HepG2 (cell line): ENCODE measurements at regions of chr4 and their contacts with region 1.

Region 1: GRCh38 chr4:38078590-38079421 is 118.6 kb downstream of the PTTG2 start:
- DNase-seq: peak; percentile 65
- ATAC-seq: peak; percentile 80
- H3K4me3 ChIP-seq: peak overlapping the region in 1 of 3 experiments; percentile 31; a peak in 1 of 6 replicates
- H3K27ac ChIP-seq: peak overlapping the region; percentile 97
- H3K4me1 ChIP-seq: peaks cover 93% of the 10 kb centered on the region
- H3K27me3 ChIP-seq: no peaks in the 10 kb centered on the region
- CTCF ChIP-seq: no peak
- EP300 ChIP-seq: no peak
- POLR2A ChIP-seq: peak in 1 of 2 experiments; percentile 55; a peak in 1 of 4 replicates
- RAD21 ChIP-seq: no peak

Region 2: DNA sequence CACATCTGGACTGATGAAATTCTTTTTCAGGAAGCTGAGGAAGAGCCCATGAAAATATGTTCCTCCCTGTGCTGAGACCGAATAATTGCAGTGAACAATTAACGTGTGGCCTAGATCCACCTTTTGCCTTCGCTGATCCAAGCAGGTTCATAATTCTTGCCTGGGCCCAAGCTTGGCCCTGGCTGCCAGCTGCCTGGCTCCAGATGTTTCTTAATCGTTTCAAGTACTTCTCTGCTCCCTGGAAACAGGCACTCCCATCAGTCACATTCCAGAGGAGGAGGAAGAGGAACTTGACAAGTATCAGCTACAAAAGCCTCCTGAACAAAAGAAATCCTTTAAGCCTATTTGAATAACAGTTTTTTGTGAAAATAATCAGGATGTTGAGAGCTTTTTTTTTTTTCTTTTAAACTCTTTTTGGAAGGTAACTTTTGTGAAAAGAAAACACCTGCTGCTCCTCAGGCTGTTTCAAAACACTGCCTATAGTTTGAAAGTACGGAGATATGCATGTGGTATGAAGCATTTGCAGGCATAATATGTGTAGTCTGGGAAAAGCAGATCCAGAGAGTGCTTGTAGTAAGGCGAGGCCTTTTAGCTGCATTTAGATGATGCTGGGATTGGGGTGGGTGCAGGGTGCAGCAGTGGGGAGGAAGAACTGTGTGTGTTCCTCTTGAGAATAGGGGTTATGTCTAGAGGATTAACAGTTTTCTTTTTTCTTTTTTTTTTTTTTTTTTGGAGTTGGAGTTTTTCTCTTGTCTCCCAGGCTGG is 35.8 kb after region 1 on chr4:
- CTCF ChIA-PET with region 1: no interaction called
- POLR2A ChIA-PET with region 1: interaction called, 17 read pairs
- in situ Hi-C with region 1: no loop called
- intact Hi-C with region 1: loop called (anchors 5 kb)
- DNase-seq: no peak
- ATAC-seq: no peak
- H3K4me3 ChIP-seq: no peak overlapping the region
- H3K27ac ChIP-seq: no peak overlapping the region
- H3K4me1 ChIP-seq: peaks cover 43% of the 10 kb centered on the region
- H3K27me3 ChIP-seq: no peaks in the 10 kb centered on the region
- CTCF ChIP-seq: no peak
- EP300 ChIP-seq: no peak
- POLR2A ChIP-seq: no peak
- RAD21 ChIP-seq: no peak

Region 3: GRCh38 chr4:38154681-38155608 is 76.1 kb after region 1 on chr4:
- CTCF ChIA-PET with region 1: no interaction called
- POLR2A ChIA-PET with region 1: interaction called, 42 read pairs
- in situ Hi-C with region 1: loop called (anchors 5 kb)
- intact Hi-C with region 1: no loop called
- DNase-seq: no peak
- ATAC-seq: no peak
- H3K4me3 ChIP-seq: no peak overlapping the region
- H3K27ac ChIP-seq: no peak overlapping the region
- H3K4me1 ChIP-seq: peaks cover 16% of the 10 kb centered on the region
- H3K27me3 ChIP-seq: no peaks in the 10 kb centered on the region
- CTCF ChIP-seq: no peak
- EP300 ChIP-seq: no peak
- POLR2A ChIP-seq: no peak
- RAD21 ChIP-seq: no peak

Region 4: GRCh38 chr4:38160487-38161207 is 81.8 kb after region 1 on chr4:
- CTCF ChIA-PET with region 1: no interaction called
- POLR2A ChIA-PET with region 1: interaction called, 42 read pairs
- in situ Hi-C with region 1: loop called (anchors 5 kb)
- intact Hi-C with region 1: loop called (anchors 1 kb)
- DNase-seq: peak; percentile 98
- ATAC-seq: peak; percentile 90
- H3K4me3 ChIP-seq: no peak overlapping the region
- H3K27ac ChIP-seq: peak overlapping the region; percentile 98
- H3K4me1 ChIP-seq: peaks cover 58% of the 10 kb centered on the region
- H3K27me3 ChIP-seq: no peaks in the 10 kb centered on the region
- CTCF ChIP-seq: no peak
- EP300 ChIP-seq: peak; percentile 95 to 98
- POLR2A ChIP-seq: no peak
- RAD21 ChIP-seq: peak; percentile 45; the same call in 1 of the 2 replicates

Region 5: GRCh38 chr4:38179690-38180377 is 101.0 kb after region 1 on chr4:
- CTCF ChIA-PET with region 1: no interaction called
- POLR2A ChIA-PET with region 1: no interaction called
- in situ Hi-C with region 1: no loop called
- intact Hi-C with region 1: loop called (anchors 2 kb)
- DNase-seq: peak; percentile 65
- ATAC-seq: peak; percentile 88
- H3K4me3 ChIP-seq: no peak overlapping the region
- H3K27ac ChIP-seq: no peak overlapping the region
- H3K4me1 ChIP-seq: peaks cover 51% of the 10 kb centered on the region
- H3K27me3 ChIP-seq: no peaks in the 10 kb centered on the region
- CTCF ChIP-seq: peak; percentile 91
- EP300 ChIP-seq: peak in 1 of 2 experiments; percentile 45; a peak in 1 of 4 replicates
- POLR2A ChIP-seq: no peak
- RAD21 ChIP-seq: peak; percentile 95

Region 6: DNA sequence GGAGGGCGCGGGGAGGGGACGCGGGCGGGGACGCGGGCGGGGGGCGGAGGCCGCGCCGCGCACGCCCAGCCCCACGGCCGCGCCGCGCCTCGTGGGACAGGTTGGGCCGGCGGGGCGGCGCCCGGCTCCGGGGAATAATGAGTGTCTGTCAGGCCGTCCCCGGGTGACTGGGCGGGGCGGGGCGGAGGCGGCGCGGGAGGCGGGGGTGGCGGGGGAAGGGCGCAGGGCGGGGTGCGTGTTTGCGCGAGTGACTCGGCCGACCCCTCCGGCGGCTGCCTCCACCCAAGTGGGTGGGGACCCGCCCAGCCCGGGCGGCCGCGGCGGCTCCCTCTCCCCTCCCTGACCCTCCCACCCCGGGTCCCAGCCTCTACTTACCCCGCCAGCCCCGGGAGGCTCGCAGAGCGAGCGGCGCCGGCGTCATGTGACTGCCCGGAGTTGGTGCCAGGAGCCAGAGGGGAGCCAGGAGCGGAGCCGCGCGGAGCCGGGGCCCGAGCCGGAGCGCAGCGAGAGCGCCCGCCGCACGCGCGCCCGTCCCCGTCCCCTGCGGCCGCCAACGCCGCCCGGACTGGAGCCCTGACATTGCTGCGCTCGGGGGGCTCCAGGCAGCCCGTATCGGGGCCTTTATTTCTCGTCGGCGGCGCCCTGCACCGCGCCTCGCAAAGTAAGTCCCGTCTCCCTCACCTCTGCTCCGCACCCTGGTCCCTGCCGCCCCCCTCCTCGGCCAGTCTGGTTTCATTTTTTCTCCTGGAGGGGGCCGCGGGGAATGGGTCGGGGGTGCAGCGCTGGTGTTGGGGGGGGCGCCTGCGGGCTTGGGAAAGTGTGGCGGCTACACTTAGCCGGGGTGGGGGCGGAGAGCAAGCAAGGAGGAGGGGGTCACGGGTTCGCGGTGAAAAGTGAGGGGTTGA is 585.2 kb after region 1 on chr4 and contains the start of gene KLF3:
- CTCF ChIA-PET with region 1: no interaction called
- POLR2A ChIA-PET with region 1: interaction called, 3 read pairs
- in situ Hi-C with region 1: no loop called
- intact Hi-C with region 1: loop called (anchors 5 kb)
- DNase-seq: peak; percentile 73
- ATAC-seq: peak; percentile 68
- H3K4me3 ChIP-seq: peak within 1 kb of the TSS; percentile 77 to 99 (median 90)
- H3K27ac ChIP-seq: peak within 1 kb of the TSS; percentile 96
- H3K4me1 ChIP-seq: peaks cover 22% of the 10 kb centered on the region
- H3K27me3 ChIP-seq: no peaks in the 10 kb centered on the region; a peak in 1 of 5 replicates
- CTCF ChIP-seq: no peak
- EP300 ChIP-seq: 0 out of 4 replicates have a peak, but pooled peaks of 1 of the 2 experiments have one; percentile 10
- POLR2A ChIP-seq: peak; percentile 44 to 71; a peak in 3 of 4 replicates
- RAD21 ChIP-seq: peak; percentile 58
- total RNA-seq, gene KLF3: 29.1 and 45.2 TPM in 2 replicates